ENCODE measurements at regions of chr10 and their contacts with region 1.

Region 1: DNA sequence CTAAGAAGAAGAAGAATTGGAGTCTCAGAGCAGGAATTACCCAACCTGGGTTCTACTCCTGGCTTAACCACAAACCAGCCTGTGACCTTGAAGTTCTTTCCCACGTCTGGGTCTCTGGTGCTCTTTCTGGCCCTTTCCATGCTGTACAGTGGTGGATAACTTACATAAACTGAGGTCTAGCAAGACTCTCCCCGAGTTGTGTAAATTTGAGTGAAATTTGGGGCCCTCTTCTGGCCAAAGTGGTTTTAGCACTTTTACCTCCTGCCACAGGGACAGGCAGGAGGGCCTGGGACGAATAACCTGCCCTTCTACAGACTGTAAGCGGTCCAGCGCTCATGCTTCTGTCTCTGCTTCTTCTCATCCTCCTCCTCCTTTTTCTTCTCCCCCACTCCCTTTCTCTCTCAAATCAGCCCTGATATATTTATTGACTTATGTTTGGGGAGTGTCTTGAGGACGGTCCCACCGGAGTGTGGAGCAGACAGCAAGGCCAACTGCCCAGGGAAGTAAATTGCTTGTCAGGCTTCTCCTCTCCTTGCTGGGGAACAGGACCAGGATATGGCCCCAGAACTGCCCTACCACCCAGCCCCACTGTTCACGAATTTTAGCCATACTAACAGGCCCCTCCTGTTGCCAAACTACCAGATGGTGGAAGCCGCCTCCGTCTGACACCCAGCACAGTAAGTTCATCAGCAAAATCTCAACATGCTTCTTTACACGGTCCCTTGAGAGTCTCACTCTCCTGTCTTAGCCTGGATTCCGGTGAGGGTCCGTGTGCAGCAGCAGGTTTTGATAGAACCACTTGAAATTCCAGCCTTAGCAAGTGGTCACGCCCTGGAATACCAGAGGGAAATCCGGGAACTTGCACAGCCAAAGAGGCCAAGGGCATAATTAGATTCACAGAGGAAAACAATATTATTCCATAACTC is 4.0 kb upstream of the SH3PXD2A start:
- DNase-seq: peak; percentile 73
- H3K4me3 ChIP-seq: no peak overlapping the region
- H3K27ac ChIP-seq: no peak overlapping the region
- H3K4me1 ChIP-seq: peaks cover 5 to 28% (median 12%) of the 10 kb centered on the region in 4 donors
- H3K27me3 ChIP-seq: no peaks in the 10 kb centered on the region
- CTCF ChIP-seq: peak; percentile 70 to 84 (median 74)
- EP300 ChIP-seq: no peak
- POLR2A ChIP-seq: no peak

Region 2: GRCh38 chr10:102998469-102998868 is 861.0 kb before region 1 on chr10:
- in situ Hi-C with region 1: no loop called
- intact Hi-C with region 1: no loop called
- DNase-seq: no peak
- H3K4me3 ChIP-seq: no peak overlapping the region
- H3K27ac ChIP-seq: no peak overlapping the region
- H3K4me1 ChIP-seq: no peaks in the 10 kb centered on the region
- H3K27me3 ChIP-seq: no peaks in the 10 kb centered on the region
- CTCF ChIP-seq: no peak
- EP300 ChIP-seq: no peak
- POLR2A ChIP-seq: no peak

Region 3: GRCh38 chr10:103592186-103593021 is 267.0 kb before region 1 on chr10:
- in situ Hi-C with region 1: loop called in 1 of 4 experiments (anchors 25 kb)
- intact Hi-C with region 1: no loop called
- DNase-seq: peak; percentile 27
- H3K4me3 ChIP-seq: no peak overlapping the region
- H3K27ac ChIP-seq: no peak overlapping the region
- H3K4me1 ChIP-seq: no peaks in the 10 kb centered on the region
- H3K27me3 ChIP-seq: no peaks in the 10 kb centered on the region
- CTCF ChIP-seq: peak; percentile 37 to 53 (median 49)
- EP300 ChIP-seq: no peak
- POLR2A ChIP-seq: no peak

Region 4: DNA sequence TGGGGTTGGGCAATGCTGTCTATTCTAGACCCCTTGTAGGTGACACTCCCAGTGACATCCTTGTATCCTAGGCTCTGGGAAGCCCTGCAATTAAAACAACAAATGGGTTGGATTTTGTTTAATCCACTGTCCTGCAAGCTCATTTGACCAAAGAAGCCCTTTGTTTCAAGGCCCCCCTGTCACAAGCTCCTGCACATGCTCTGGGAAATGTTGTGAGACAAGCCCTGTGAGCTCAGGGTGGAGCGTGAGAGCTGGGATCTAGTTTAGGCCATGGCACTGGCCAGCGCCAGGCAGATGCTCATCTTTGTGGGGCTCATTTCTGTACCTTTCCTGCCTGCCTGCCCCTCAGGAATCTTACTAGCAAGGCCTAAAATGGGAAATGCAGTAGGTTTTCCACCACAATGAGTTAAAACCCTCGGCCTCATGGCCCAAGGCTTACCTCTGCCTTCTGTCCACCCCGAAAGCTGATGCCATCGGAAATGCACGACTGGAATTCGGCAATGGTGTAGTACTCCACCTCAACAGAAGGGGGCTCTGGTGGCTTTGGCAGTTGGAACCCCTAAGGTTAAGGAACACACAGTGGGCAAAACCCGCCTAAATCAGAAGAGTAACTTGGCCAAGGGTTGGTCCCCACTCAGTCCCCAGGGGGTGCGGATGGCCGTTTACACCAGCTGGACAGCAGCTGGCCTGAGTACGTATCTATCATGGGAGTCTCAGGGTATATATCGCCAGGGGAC is 253.9 kb before region 1 on chr10:
- in situ Hi-C with region 1: loop called in 1 of 4 experiments (anchors 25 kb)
- intact Hi-C with region 1: no loop called
- DNase-seq: peak; percentile 60
- H3K4me3 ChIP-seq: no peak overlapping the region
- H3K27ac ChIP-seq: peak overlapping the region in 3 of 4 donors; percentile 7 to 27 (median 10)
- H3K4me1 ChIP-seq: peaks cover 0 to 5% (median under 1%) of the 10 kb centered on the region in 4 donors
- H3K27me3 ChIP-seq: no peaks in the 10 kb centered on the region
- CTCF ChIP-seq: peak; percentile 73 to 85 (median 77)
- EP300 ChIP-seq: no peak
- POLR2A ChIP-seq: no peak

Region 5: DNA sequence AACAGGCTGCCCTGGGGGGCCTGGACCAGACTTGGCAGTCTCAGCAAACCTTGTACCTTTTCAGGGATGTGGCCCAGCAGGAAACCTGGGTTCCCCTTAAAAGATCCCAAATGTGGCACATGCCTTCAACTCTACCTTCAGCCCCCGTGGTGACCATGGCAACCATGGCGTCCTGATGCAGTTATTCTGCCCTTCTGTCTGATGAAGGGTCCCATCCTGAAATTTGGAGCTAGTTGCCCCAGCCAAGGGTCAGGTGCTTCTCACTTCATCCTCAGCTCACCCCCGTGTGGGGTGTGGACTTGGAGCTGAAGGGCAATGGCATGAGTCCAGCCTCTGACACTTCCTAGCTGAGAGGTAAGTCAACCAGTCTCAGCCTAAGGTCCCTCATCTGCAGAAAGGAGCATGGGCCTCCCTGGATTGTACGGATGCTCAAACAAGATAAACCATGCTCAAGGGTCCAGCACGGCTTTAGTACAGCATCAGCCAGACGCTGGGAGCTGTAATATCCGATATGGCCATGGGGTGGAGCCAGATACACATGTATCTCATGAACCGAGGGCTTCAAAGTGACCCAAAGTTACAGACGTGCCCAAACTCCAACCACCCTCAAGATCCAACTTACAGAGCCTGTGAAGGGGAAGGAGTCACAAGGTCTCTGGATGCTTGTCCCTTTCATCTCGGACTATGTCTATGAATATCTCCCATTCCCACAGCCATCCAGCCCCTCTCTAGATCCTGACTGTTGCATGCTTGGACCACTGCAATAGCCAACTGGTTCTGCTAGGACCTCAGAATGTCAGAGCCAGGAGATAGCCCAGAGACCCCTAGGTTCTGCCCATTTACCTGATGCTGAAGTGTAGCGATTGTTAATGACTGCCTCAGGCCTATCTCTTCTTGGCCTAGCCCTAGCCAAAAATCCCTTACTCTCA is 146.6 kb before region 1 on chr10:
- in situ Hi-C with region 1: loop called (anchors 5 to 10 kb)
- intact Hi-C with region 1: loop called (anchors 1 kb)
- DNase-seq: peak; percentile 87
- H3K4me3 ChIP-seq: no peak overlapping the region
- H3K27ac ChIP-seq: no peak overlapping the region
- H3K4me1 ChIP-seq: peaks cover 0 to 10% (median 4%) of the 10 kb centered on the region in 4 donors
- H3K27me3 ChIP-seq: no peaks in the 10 kb centered on the region
- CTCF ChIP-seq: peak; percentile 89 to 96 (median 92)
- EP300 ChIP-seq: no peak
- POLR2A ChIP-seq: no peak

Region 6: GRCh38 chr10:103911021-103911459 is 51.6 kb after region 1 on chr10:
- in situ Hi-C with region 1: no loop called
- intact Hi-C with region 1: no loop called
- DNase-seq: no peak
- H3K4me3 ChIP-seq: no peak overlapping the region
- H3K27ac ChIP-seq: peak overlapping the region; percentile 27 to 59 (median 46)
- H3K4me1 ChIP-seq: peaks cover 13 to 38% (median 23%) of the 10 kb centered on the region in 4 donors
- H3K27me3 ChIP-seq: no peaks in the 10 kb centered on the region
- CTCF ChIP-seq: no peak
- EP300 ChIP-seq: no peak
- POLR2A ChIP-seq: no peak